Right cardiac atrium (tissue), 5 donors: ENCODE measurements at regions of chr3 and their contacts with region 1.

Region 1: DNA sequence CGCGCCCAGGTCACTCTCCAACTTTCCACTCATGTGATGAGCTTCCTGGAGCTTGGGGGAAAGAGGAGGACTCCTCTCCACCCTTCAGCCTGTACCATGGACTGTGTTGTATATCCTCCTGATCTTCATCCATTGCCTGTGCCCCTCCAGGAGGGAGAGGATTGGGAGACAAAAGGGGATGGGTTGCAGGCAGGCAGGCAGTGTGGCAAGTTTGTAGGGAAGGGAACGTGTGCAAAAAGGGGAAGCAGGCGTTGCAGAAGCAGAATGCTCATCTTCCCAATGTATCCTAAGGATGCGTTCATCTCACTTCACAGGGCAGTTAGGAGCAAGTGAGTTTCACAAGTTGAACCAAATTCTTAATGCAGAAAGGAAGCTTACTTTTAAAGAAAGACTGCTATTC is 28.1 kb upstream of the GHSR start:
- DNase-seq: no peak
- ATAC-seq: peak in 1 of 2 donors; percentile 20
- H3K4me3 ChIP-seq: no peak overlapping the region
- H3K27ac ChIP-seq: no peak overlapping the region
- H3K4me1 ChIP-seq: peaks cover 2% of the 10 kb centered on the region
- H3K27me3 ChIP-seq: no peaks in the 10 kb centered on the region

Region 2: DNA sequence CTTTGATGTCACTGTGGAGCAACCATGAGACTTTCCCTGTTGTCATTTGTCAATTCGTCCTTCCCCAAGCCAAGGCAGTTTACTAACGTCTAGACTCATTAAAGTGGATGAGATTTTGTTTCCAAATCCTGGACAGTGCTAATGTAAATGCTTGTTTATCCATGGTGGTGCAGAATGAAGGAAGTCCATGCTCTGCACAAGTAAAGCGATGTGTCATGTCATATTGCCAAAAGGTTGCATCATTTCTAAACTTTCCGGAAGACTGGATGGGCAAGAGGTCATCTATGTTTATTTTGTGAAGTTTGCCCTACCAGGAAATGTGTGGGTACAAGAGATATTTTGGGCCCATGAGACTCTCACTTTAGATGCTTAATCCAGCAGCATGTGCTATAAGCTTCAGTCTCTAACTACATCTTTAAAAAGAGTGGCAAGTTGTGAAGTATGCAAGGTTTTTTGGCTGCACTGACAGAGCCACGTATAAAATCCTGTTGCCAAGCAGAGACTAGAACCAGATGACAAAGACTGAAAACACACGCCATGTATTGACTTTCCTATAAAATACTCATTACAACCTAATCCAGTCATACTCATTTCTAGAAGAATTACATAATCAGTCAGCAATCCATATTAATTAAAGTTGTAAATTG is 509.1 kb before region 1 on chr3:
- intact Hi-C with region 1: no loop called
- DNase-seq: no peak
- ATAC-seq: peak; percentile 81 to 85
- H3K4me3 ChIP-seq: no peak overlapping the region
- H3K27ac ChIP-seq: no peak overlapping the region
- H3K4me1 ChIP-seq: peaks cover 2% of the 10 kb centered on the region
- H3K27me3 ChIP-seq: no peaks in the 10 kb centered on the region

Region 3: DNA sequence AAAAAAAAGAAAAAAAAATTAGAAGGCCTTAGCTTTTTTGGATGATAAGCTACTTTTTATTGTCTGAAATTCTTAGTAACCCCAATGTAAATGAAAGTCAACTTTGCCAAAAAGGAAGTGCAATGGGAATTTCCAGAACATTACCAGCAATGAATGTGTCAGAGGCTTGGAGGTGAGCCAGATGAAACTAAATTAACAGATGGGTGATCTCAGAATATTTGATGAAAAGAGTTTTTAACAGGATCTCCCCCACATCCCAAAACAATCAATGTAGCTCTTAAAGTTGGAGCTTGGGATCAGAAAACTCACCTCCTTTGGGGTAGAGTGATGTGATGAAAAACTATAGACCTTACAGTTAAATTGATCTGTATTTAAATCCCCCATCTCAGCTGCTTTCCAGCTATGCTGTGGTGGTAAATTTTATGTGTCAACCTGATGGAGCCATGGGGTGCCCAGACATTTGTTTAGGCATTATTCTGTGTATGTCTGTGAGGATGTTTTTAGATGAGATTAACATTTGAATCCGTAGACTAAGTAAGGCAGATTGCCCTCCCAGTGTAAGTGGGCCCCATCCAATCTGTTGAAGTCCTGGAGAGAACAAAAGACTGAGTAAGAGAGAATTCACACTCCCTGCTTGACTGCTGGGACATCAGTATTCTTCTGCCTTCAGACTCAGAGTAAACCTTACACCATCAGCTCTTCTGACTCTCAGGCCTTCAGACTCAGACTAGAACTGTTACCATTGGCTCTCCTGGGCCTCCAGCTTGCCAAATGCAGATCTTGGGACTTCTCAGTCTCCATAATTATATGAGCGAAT is 131.2 kb after region 1 on chr3:
- intact Hi-C with region 1: loop called in 1 of 4 experiments (anchors 10 kb)
- DNase-seq: no peak
- ATAC-seq: peak; percentile 70 to 71
- H3K4me3 ChIP-seq: no peak overlapping the region
- H3K27ac ChIP-seq: no peak overlapping the region
- H3K4me1 ChIP-seq: no peaks in the 10 kb centered on the region
- H3K27me3 ChIP-seq: no peaks in the 10 kb centered on the region

Region 4: DNA sequence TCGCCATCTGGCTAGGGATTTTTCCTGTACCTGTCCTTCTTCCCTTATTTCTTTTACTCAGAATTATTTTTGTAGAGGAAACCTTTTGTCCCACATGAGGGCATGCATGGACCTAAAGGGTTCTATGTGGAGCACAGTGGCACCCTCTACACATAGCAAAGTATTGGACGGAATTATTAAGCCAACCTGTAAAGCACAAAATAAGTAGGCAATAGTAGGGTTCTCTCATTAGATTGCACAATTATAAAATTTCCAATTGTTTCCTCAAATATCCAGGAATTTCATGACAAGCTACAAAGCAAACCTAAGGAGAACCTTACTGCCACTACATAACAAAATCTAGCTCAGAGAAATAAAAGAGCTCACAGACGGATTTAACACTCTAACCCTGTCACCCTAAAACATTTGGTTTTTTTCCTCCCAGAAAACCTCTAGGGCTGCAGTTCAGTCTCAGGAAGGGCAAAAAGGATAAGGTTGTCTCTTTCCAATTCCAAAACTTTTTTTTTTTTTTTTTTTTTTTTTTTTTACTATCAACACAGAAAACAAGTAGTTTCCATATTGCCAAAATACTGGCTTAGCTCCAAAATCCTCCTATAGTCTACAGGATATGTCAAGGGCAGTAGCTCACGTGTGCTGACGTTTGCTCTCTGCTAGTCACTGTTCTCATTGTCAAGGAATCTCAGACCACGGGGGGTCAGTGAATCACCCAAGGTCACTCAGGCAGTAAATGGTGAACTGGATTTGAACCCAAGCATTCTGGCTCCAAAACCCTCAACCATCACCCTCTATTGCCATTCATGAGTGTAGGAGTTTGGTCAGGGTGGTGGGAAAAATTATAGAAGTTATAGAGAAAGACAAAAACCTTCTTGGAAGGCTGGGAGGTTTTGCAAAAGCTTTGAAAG is 182.2 kb after region 1 on chr3:
- intact Hi-C with region 1: loop called in 1 of 4 experiments (anchors 10 kb)
- DNase-seq: no peak
- ATAC-seq: peak in 1 of 2 donors; percentile 82
- H3K4me3 ChIP-seq: no peak overlapping the region
- H3K27ac ChIP-seq: no peak overlapping the region
- H3K4me1 ChIP-seq: peaks cover 2% of the 10 kb centered on the region
- H3K27me3 ChIP-seq: no peaks in the 10 kb centered on the region